Activated T-helper 1 cell treated with anti-CD3 and anti-CD28 coated beads, Interleukin-12 subunit alpha, Interleukin-12 subunit beta, Interleukin-2, Interleukin-4 antibody, amounts not matched to agents 30 ng/mL and 10 ng/mL and 1 ng/mL, durations not matched to agents 14 hours and 24 hours and 36 hours (primary cell): ENCODE measurements at regions of chr4 and their contacts with region 1.

Region 1: DNA sequence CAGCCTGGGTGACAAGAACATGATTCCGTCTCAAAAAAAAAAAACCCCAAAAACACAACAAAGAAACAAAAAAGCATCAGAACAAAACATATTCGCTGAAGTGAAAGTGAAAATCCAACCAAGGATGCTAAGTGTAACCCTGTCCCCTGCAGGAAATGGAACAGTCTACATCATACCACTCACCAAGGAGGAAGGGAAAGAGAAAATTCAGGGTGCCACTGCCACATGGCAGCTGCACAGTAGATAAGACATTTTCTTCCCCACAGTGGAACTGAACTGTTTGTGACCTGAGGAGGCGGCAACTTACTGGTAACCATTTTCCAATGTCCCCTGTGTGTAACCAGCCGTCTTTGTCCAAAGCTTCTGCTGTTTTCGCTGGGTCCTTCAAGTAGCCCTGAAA is 28.2 kb upstream of the CENPU start:
- DNase-seq: peak; percentile 59
- H3K4me3 Mint-ChIP-seq: peak overlapping the region; percentile 16
- H3K27ac Mint-ChIP-seq: peak overlapping the region; percentile 85
- H3K4me1 Mint-ChIP-seq: peaks cover 33% of the 10 kb centered on the region
- H3K27me3 Mint-ChIP-seq: no peaks in the 10 kb centered on the region

Region 2: DNA sequence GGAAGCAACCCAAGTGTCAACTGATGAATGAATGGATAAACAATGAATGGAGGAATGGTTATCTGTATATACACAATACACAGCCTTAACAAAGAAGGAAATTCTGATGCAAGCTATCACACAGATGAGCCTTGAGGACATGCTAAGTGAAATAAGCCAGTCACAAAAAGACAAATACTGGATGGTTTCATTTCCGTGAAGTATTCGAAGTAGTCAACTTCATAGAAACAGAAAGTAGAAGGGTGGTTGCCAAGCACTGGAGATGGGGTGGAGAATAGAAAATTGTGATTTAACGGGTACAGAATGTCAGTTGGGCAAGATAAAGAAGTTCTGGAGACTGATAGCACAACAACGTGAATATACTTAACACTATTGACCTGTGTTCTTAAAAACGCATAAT is 56.4 kb before region 1 on chr4:
- intact Hi-C with region 1: loop called (anchors 2 kb)
- DNase-seq: no peak
- H3K4me3 Mint-ChIP-seq: peak overlapping the region; percentile 8
- H3K27ac Mint-ChIP-seq: peak overlapping the region; percentile 32
- H3K4me1 Mint-ChIP-seq: peaks cover 27% of the 10 kb centered on the region
- H3K27me3 Mint-ChIP-seq: no peaks in the 10 kb centered on the region

Region 3: GRCh38 chr4:184792950-184793555 is 31.0 kb after region 1 on chr4:
- intact Hi-C with region 1: loop called (anchors 1 kb)
- DNase-seq: no peak
- H3K4me3 Mint-ChIP-seq: peak overlapping the region; percentile 25
- H3K27ac Mint-ChIP-seq: peak overlapping the region; percentile 55
- H3K4me1 Mint-ChIP-seq: peaks cover 47% of the 10 kb centered on the region
- H3K27me3 Mint-ChIP-seq: no peaks in the 10 kb centered on the region

Region 4: GRCh38 chr4:184983672-184984356 is 221.7 kb after region 1 on chr4:
- intact Hi-C with region 1: loop called (anchors 5 kb)
- DNase-seq: peak; percentile 39
- H3K4me3 Mint-ChIP-seq: no peak overlapping the region
- H3K27ac Mint-ChIP-seq: no peak overlapping the region
- H3K4me1 Mint-ChIP-seq: no peaks in the 10 kb centered on the region
- H3K27me3 Mint-ChIP-seq: peaks cover 11% of the 10 kb centered on the region